ENCODE measurements at regions of chr11 and their contacts with region 1.

Region 1: DNA sequence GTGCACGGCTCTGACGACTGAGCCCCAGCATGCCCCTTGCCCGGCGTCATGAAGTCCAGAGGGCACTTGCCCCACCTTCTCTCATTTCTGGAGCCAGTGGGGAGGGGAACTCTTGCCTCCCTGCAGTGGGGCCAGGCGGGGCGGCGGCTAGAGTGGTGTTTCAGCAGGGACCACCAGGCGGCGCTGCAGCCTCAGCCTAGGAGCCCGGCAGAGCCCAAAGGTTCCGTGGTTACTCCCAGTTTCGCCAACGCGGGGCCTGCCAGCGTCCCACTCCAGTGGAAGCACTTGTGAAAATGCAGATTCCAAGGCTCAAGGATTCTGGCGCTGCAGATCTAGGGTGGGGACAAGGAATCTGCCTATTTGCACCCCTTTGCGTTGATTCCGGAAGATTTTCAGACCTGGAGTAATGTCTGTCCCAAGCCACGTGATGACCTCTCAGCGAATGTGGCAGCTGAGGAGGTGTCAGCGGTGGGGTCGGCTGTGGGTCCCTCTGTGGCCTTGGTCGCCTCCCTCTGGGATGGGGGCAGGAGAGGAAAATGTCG is 55.7 kb downstream of the CD82 start:
- DNase-seq: peak; percentile 41
- ATAC-seq: peak; percentile 89
- H3K4me3 ChIP-seq: peak overlapping the region; percentile 16 to 27; a peak in 2 of 4 replicates
- H3K27ac ChIP-seq: no peak overlapping the region
- H3K4me1 ChIP-seq: peaks cover 0 to 11% of the 10 kb centered on the region in 2 experiments; a peak in 2 of 4 replicates
- H3K27me3 ChIP-seq: no peaks in the 10 kb centered on the region
- CTCF ChIP-seq: peak; percentile 93 to 98 (median 96)
- POLR2A ChIP-seq: no peak
- RAD21 ChIP-seq: peak; percentile 99

Region 2: DNA sequence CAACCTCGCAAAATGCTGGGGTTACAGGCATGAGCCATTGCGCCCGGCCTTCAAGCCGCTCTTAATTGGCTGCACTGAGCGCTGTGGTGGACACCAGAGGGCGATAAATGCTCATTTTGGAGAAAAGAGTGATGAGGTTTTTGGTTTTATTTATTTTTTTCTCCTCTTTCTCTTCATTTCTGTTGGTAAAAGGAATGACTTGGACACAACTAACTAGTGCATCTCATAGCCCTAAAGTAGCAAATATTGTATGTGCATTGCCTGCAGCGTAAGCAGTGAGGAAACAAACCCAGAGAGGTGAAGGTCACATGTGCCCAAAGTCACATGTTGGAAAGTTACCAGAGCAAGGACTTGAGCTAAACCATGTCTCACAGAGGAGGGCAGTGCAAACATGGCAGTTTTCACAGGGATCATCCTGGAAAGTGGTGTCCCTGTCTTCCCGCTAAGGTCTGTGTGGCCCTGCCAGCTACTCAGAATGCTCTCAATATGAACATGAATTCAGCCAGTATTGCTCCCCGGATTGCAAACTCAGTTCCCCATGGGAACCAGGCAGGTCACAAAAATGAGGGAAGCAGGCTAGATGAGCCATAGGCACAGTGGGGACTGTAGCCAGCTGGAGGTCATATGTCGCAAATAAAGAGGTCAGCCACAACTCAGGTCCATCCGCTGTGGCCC is 64.3 kb before region 1 on chr11:
- CTCF ChIA-PET with region 1: interaction called, 138 read pairs
- POLR2A ChIA-PET with region 1: interaction called, 4 read pairs
- RAD21 ChIA-PET with region 1: interaction called, 19 to 28 read pairs
- intact Hi-C with region 1: loop called (anchors 1 kb)
- DNase-seq: peak; percentile 54
- ATAC-seq: peak; percentile 94
- H3K4me3 ChIP-seq: no peak overlapping the region
- H3K27ac ChIP-seq: no peak overlapping the region
- H3K4me1 ChIP-seq: peaks cover 9 to 12% of the 10 kb centered on the region in 2 experiments; a peak in 3 of 4 replicates
- H3K27me3 ChIP-seq: no peaks in the 10 kb centered on the region
- CTCF ChIP-seq: peak; percentile 65 to 95 (median 79)
- POLR2A ChIP-seq: no peak
- RAD21 ChIP-seq: peak; percentile 93

Region 3: DNA sequence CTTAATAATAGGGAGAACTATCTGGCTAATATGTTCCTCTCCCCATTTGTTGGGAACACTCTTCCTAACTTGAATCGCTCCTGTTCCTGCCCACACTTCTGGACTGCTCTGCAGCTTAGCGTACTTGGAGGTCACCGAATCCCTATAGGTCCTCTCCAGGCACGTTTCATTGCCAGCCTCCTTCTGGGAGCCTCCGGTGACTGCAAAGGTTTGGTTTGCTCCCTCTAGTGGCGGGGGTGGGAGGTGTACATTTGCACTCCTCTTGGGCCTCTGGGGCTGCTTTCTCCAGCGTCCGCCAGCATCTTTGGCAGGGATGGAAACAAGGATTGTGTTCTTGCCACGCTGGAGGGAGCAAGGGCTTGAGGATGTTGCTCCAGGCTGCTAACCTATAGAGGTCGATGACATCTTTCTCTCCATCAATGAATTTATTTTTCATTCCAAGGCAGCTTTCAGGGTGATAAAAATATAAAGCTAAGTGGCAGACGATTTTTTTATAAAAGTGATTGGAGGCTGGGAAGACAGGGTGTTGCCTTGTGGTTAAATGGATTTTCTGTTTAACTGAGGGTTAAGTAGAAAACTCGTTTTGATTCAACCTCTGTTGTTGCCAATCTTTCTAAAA is 154.3 kb after region 1 on chr11:
- CTCF ChIA-PET with region 1: interaction called, 7 read pairs
- POLR2A ChIA-PET with region 1: no interaction called
- RAD21 ChIA-PET with region 1: interaction called in 1 of 2 experiments, 3 read pairs
- intact Hi-C with region 1: loop called (anchors 5 kb)
- DNase-seq: peak; percentile 69
- ATAC-seq: peak; percentile 99
- H3K4me3 ChIP-seq: no peak overlapping the region
- H3K27ac ChIP-seq: no peak overlapping the region
- H3K4me1 ChIP-seq: no peaks in the 10 kb centered on the region
- H3K27me3 ChIP-seq: no peaks in the 10 kb centered on the region
- CTCF ChIP-seq: peak; percentile 77 to 94 (median 88)
- POLR2A ChIP-seq: no peak
- RAD21 ChIP-seq: peak; percentile 63

Region 4: DNA sequence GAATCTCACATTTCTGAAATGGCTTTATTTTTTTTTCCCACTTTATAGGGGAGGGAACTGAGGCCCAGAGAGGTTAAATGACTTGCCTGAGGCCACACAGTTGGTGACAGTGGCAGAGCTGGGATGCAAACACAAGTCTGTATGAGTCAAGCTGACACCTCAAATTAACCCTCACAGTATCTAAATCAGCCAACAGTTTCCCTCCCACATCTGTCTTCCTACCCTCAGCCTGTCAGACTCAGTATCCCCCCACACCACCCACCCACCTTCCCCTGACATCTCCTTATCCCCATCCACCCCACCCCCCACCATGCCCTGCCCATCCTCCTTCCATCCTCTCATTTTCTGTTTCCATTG is 234.3 kb after region 1 on chr11:
- CTCF ChIA-PET with region 1: no interaction called
- POLR2A ChIA-PET with region 1: no interaction called
- RAD21 ChIA-PET with region 1: no interaction called
- intact Hi-C with region 1: no loop called
- DNase-seq: no peak
- ATAC-seq: no peak
- H3K4me3 ChIP-seq: no peak overlapping the region
- H3K27ac ChIP-seq: no peak overlapping the region
- H3K4me1 ChIP-seq: peaks cover 0 to 18% of the 10 kb centered on the region in 2 experiments
- H3K27me3 ChIP-seq: no peaks in the 10 kb centered on the region
- CTCF ChIP-seq: no peak
- POLR2A ChIP-seq: no peak
- RAD21 ChIP-seq: no peak

Region 5: GRCh38 chr11:44911029-44911814 is 290.0 kb after region 1 on chr11:
- CTCF ChIA-PET with region 1: interaction called, 39 read pairs
- POLR2A ChIA-PET with region 1: interaction called, 4 read pairs
- RAD21 ChIA-PET with region 1: interaction called in 1 of 2 experiments, 3 read pairs
- intact Hi-C with region 1: loop called (anchors 1 kb)
- DNase-seq: peak; percentile 59
- ATAC-seq: peak; percentile 95
- H3K4me3 ChIP-seq: no peak overlapping the region
- H3K27ac ChIP-seq: no peak overlapping the region
- H3K4me1 ChIP-seq: no peaks in the 10 kb centered on the region
- H3K27me3 ChIP-seq: no peaks in the 10 kb centered on the region
- CTCF ChIP-seq: peak; percentile 66 to 89 (median 80)
- POLR2A ChIP-seq: no peak
- RAD21 ChIP-seq: peak; percentile 83

Region 6: GRCh38 chr11:45405916-45406670 is 784.9 kb after region 1 on chr11:
- CTCF ChIA-PET with region 1: no interaction called
- POLR2A ChIA-PET with region 1: no interaction called
- RAD21 ChIA-PET with region 1: no interaction called
- intact Hi-C with region 1: no loop called
- DNase-seq: no peak
- ATAC-seq: 0 out of 2 replicates have a peak, but pooled peaks have one; percentile 44
- H3K4me3 ChIP-seq: no peak overlapping the region
- H3K27ac ChIP-seq: no peak overlapping the region
- H3K4me1 ChIP-seq: no peaks in the 10 kb centered on the region
- H3K27me3 ChIP-seq: peaks cover 56% of the 10 kb centered on the region
- CTCF ChIP-seq: peak; percentile 32 to 58 (median 55); a peak in 5 of 6 replicates
- POLR2A ChIP-seq: no peak
- RAD21 ChIP-seq: peak; percentile 42; the same call in 1 of the 2 replicates

Measured in HCT116 (cell line).